ENCODE measurements at regions of chr6 and their contacts with region 1.

Region 1: DNA sequence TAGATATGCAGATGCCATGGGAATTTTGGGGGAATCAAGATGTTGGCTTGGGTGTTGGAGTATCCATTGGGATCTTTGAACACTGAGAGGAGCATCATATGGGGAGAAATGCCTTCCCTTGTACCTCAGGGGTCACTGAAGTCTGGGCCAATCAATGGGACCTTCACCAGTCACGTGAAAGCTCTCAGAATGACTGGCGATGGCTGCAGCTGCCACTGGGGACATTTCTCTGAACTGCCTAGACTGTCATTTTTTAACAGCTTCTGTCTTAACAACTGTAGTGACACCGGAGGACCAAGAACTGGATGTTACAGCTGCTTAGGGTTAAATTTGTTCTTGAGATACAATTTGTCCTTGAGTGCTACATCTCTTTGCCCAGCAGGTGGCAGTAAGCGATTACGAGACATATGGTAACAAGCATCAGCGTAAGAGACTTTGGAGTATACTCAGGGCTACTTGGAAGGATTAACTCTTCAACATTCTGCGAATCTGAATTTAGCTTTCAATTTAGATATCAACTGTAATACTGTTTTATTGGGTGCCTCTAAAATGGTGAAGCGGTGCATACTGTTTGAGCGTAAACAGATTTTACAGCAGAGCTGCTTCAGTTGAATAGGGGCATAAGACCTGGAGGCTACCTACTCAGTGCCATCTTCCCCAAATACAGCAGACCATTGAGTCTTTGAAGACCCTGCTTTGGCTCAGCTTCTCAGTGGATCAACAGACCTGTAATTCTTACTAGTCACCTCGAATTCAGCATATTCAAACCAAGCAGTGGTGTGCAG is 36.0 kb downstream of the CCN2 start:
- DNase-seq: no peak
- H3K4me3 ChIP-seq: no peak overlapping the region
- CTCF ChIP-seq: peak; percentile 72

Region 2: DNA sequence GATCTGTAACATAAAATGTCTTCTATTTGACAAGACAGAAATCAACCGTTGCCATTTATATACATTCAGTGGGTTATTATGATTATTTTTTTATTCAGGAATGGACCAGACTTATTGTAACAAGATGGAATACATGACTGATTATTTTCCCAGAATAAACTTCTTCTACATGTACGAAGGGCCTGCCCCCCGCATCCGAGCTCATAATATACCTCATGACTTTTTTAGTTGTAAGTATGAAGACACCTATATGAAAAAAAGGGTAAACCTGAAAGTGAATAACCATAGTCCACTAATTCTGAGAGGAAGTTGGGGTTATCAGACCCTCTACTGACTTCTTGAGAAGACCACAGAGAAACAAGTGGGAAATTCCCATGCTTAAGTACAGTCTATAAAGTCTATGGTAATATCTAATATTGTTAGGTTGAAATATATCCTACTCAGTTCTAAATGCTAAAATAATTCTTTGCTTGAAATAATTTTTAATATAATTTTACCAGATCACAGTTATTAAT is 229.8 kb before region 1 on chr6:
- CTCF ChIA-PET with region 1: interaction called, 12 read pairs
- POLR2A ChIA-PET with region 1: no interaction called
- DNase-seq: no peak
- H3K4me3 ChIP-seq: no peak overlapping the region
- CTCF ChIP-seq: no peak

Region 3: GRCh38 chr6:131877999-131878789 is 37.0 kb before region 1 on chr6:
- CTCF ChIA-PET with region 1: no interaction called
- POLR2A ChIA-PET with region 1: no interaction called
- DNase-seq: no peak
- H3K4me3 ChIP-seq: no peak overlapping the region
- CTCF ChIP-seq: no peak

Region 4: DNA sequence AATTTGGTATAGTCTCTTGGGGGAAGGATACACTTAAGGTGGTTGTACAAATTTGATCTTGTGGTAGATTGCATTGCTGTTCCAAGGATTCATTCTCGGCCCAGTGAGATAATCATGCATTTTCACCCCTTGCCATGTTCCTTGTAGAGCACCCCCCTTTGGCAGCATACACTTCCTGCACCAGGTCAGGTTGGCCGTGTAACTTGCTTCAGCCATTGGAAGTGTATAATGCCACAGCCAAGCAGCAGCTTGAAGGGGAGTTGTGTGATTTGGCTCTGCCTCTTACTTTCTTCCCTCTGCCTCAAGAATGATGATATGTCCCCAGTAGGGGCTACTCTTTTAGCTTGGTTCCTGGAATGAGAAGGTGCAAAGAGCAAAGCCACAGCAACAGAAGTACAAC is 14.1 kb after region 1 on chr6:
- CTCF ChIA-PET with region 1: interaction called, 72 read pairs
- POLR2A ChIA-PET with region 1: no interaction called
- DNase-seq: no peak
- H3K4me3 ChIP-seq: no peak overlapping the region
- CTCF ChIP-seq: no peak

Region 5: DNA sequence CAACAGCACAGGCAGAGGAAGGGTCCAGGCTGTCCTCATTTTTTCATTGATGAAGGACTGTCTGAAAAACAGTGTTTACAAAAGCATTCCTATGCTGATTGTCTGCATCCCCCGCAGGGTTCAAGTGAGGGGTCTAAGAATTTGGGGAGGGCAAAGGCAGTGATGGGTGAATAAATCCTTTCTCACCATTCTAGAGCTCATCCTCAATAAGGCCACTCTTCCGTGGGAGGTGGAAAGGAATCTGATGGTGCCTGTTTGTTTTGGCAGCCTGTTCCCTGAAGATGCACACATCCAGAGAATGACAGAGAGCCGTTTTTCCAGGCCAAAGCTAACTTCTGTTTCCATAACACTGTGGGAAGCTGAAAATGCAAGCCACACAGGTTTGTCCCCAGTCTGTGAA is 321.6 kb after region 1 on chr6:
- CTCF ChIA-PET with region 1: interaction called, 12 read pairs
- POLR2A ChIA-PET with region 1: no interaction called
- DNase-seq: no peak
- H3K4me3 ChIP-seq: no peak overlapping the region
- CTCF ChIP-seq: no peak

Region 6: DNA sequence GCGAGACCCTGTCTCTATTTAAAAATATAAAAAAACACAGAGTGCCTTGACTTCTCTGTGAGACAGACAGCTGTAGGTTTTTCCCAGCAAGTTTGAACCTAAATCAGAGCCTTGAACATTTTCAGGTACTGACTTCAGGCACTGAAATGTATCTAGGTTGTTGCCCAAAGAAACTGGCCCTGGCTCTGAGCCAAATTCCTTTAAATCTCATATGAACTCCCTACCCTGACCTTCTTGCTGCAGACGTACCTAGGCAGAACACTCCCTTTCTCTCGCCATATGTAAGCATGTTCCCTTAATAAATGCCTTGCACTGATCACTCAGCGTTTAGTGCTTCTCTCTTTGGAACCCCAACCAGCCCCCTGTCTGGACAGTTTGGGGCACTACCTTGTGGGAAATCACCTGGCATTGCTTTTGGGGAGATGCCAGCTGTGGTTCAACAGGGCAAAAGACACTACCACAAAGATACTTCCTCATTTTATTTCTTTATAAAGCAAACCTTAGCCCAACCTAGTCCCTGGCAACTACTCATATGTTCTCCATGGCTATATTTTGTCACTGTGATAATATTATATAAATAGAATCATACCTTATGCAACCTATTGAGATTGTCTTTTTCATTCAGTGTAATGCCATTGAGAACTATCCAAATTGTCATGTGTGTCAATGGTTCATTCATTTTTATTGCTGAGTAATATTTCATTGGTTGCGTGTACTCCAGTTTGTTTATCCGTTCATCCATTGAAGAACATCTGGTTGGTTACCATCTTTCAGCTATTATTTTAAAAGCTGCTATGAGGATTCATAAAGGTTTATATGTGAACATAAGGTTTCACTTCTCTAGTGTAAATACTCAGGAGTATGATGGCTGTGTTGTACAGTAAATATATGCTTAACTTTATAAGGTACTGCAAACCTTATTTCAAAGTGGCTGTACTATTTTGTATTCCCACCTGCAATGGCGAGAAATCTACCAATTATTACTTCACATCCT is 371.2 kb after region 1 on chr6:
- CTCF ChIA-PET with region 1: interaction called, 166 read pairs
- POLR2A ChIA-PET with region 1: no interaction called
- DNase-seq: no peak
- H3K4me3 ChIP-seq: no peak overlapping the region
- CTCF ChIP-seq: no peak

Region 7: DNA sequence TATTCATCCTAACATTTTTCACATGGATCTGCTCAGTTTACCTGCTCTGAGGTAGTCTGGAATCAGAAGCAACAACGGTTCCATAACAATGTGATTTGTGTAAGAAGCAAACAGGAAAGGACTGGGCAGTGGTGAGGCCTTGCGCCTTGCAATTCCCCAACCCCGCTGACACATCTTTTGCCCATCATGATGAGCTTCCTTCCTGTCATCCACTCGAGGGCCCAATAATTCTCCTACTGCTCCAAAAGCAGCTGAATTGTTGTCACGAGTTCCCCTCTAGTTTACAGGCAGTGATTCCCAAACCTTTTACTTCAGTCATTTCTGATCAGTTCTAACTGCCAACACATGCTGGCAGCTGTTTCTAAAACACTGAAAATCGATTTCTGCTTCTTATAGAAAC is 574.9 kb after region 1 on chr6:
- CTCF ChIA-PET with region 1: interaction called, 14 read pairs
- POLR2A ChIA-PET with region 1: no interaction called
- DNase-seq: no peak
- H3K4me3 ChIP-seq: no peak overlapping the region
- CTCF ChIP-seq: no peak